Activated CD4-positive, alpha-beta T cell treated with anti-CD3 and anti-CD28 coated beads, Interleukin-2, amount 10 ng/mL, durations not matched to agents 7 days and 5 days (primary cell): ENCODE measurements at regions of chr4 and their contacts with region 1.

Region 1: DNA sequence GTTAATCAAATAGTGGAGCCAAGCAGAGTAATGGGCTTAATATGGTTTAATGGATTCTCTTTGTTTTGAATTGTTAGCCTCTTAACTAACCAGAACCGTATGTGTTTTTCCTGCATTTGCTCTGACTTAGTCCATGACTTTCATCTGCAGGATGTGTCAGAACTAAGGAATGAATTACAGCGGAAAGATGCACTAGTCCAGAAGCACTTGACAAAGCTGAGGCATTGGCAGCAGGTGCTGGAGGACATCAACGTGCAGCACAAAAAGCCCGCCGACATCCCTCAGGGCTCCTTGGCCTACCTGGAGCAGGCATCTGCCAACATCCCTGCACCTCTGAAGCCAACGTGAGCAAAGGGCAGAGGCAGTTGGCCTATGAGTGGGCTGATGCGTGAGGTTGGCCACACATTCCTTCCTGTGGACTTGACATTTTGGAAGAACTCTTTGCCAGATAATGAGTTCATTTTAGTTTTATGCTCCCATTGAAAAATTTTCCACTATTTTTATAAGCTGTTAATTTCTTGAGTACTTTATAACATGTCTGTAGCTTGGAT is 9.1 kb downstream of the MED28 start:
- DNase-seq: no peak
- H3K4me3 Mint-ChIP-seq: no peak overlapping the region
- H3K27ac Mint-ChIP-seq: no peak overlapping the region
- H3K4me1 Mint-ChIP-seq: peaks cover 15% of the 10 kb centered on the region
- H3K27me3 Mint-ChIP-seq: no peaks in the 10 kb centered on the region

Region 2: DNA sequence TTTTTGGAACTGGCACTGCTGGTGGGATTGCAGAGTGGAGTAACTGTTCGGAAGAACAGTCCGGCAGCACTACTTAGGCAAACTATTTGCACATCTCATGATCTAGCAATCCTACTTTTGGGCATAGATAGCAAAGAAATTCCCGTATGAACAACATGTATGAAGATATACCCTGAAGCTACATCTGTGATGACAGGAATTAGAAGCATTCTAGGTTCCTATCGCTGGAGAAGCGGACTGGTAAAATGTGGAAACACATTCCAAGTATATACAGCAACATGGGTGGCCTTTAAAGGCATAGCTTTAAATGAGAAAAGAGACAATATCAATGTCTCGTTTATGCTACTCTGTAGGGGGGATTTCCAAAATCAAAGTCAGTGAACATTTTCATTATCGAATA is 183.9 kb after region 1 on chr4:
- CTCF ChIA-PET with region 1: no interaction called
- POLR2A ChIA-PET with region 1: interaction called, 18 read pairs
- DNase-seq: no peak
- H3K4me3 Mint-ChIP-seq: peak overlapping the region; percentile 92
- H3K27ac Mint-ChIP-seq: no peak overlapping the region
- H3K4me1 Mint-ChIP-seq: peaks cover 40% of the 10 kb centered on the region
- H3K27me3 Mint-ChIP-seq: no peaks in the 10 kb centered on the region